PC-3 (cell line): ENCODE measurements at regions of chr9 and their contacts with region 1.

Region 1: GRCh38 chr9:34899535-34900158 is 58.4 kb upstream of the PHF24 start:
- DNase-seq: peak; percentile 76
- ATAC-seq: peak; percentile 100
- H3K4me3 ChIP-seq: no peak overlapping the region
- H3K27ac ChIP-seq: no peak overlapping the region
- H3K4me1 ChIP-seq: no peaks in the 10 kb centered on the region
- H3K27me3 ChIP-seq: peaks cover 22% of the 10 kb centered on the region
- CTCF ChIP-seq: peak; percentile 74

Region 2: DNA sequence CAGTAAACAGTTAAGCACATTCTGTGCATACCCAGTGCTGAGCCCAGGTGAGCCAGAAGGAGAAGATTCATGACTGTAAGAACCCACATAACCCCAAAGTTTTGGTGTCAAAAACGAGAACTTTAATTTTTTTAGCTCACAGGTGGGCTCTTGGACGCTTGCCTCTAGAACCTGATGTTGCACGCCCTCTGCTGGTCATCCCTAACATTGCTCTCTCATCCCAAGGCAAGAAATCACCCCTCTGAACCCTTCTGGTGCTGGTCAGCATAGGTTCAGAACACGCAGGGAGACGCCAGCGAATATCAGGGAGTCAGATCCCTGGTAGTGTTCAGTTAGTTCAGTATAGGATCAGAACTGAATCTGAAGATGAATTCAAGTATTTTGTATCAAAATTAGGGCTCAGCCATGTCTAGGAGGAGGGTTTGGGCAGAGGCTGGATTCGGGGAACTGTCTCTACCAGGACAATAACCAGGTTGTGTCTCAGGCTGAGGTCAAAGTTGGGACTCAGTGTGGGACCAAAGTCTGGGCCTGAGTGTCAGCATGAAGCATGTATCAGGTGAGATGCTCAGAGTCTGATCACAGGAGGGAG is 85.8 kb after region 1 on chr9:
- CTCF ChIA-PET with region 1: interaction called, 13 read pairs
- POLR2A ChIA-PET with region 1: no interaction called
- intact Hi-C with region 1: loop called (anchors 2 kb)
- DNase-seq: peak; percentile 65
- ATAC-seq: no peak
- H3K4me3 ChIP-seq: no peak overlapping the region
- H3K27ac ChIP-seq: no peak overlapping the region
- H3K4me1 ChIP-seq: no peaks in the 10 kb centered on the region; the same call in 1 of the 2 replicates
- H3K27me3 ChIP-seq: no peaks in the 10 kb centered on the region
- CTCF ChIP-seq: peak; percentile 74

Region 3: GRCh38 chr9:34994260-34994899 is 94.7 kb after region 1 on chr9:
- CTCF ChIA-PET with region 1: interaction called, 22 read pairs
- POLR2A ChIA-PET with region 1: no interaction called
- intact Hi-C with region 1: no loop called
- DNase-seq: peak; percentile 63
- ATAC-seq: peak; percentile 25
- H3K4me3 ChIP-seq: no peak overlapping the region
- H3K27ac ChIP-seq: no peak overlapping the region
- H3K4me1 ChIP-seq: peaks cover 34% of the 10 kb centered on the region
- H3K27me3 ChIP-seq: no peaks in the 10 kb centered on the region
- CTCF ChIP-seq: peak; percentile 70

Region 4: DNA sequence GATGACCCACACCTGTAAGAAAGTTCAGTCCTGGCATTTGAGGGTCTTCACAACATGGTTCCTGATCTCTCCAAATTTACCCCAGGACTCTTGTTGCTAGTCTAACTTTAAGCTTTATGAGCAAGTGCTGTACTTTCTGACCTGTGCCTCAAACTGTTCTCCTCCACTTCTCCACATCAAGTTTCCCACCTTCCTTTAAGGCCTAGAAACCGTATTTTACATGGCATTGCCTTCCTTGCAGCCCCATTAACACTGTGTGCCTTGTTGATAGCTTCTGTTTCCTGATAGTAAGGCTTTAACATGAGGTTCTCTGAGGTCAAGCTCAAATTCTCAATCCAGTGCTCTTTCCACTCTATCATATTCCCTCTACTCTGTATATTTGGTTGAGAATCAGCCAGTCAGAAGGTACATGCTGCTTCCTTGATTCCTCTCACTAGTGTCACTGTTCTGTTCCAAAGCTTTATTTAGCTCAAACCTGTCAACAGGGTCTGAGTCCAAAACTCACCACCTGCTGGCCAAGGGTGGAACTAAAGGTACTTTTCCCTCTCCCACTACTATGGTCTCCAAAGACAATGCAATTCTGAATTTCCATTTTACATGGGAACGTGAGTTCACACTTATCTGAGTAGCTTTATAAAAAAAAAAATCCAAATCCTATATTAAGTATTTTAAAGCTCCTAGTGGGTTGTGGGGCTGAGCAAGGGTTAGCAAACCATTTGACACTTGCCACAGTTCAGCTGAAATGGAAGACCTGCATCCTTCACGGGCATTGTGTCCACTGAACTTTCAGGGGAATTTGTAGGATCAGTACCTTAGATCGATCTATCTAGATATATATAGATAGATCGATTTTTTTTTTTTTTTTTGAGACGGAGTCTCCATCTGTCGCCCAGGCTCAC is 151.7 kb after region 1 on chr9:
- CTCF ChIA-PET with region 1: interaction called, 16 read pairs
- POLR2A ChIA-PET with region 1: no interaction called
- intact Hi-C with region 1: loop called (anchors 1 kb)
- DNase-seq: peak; percentile 61
- ATAC-seq: peak; percentile 60
- H3K4me3 ChIP-seq: no peak overlapping the region
- H3K27ac ChIP-seq: no peak overlapping the region
- H3K4me1 ChIP-seq: no peaks in the 10 kb centered on the region
- H3K27me3 ChIP-seq: no peaks in the 10 kb centered on the region
- CTCF ChIP-seq: peak; percentile 68

Region 5: DNA sequence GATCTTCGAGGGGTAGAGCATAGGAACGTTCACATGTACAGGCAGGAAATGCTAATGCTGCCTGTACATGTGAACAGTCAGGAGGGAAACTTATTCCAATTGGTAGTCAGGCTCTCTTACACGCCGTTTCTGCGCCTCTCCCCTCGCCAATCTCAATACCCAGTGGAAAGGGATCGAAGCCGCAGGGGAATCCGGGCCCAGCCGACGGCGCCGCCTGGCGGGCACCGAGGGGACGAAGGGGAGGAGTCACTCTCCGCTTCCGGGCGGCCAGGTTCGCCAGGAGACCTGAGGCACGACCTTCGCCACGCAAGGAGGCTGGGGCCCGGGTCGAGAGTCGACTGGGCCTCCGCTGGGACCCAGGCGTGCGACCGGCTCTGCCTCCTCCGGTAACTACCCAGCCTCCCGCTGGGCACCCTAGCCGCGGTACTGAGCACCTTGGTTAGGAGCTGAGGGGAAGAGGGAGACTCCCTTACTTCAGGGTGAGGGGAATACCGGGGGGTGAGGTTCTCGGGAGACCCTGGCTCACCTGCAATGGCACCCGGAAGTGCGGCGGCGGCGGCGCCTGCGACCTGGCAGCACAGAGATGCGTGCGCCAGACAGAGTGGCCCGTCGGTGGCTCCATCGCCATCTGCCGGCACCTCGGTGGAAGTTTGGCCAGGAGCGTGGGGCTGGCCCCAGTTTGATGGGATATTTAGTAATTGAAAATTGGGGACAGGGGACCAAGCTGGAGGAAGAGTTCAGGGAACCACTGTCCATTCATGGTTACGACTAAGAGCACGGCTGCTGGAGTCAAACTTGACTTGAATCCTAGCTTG is 196.6 kb after region 1 on chr9 and contains the start of gene PIGO:
- CTCF ChIA-PET with region 1: interaction called, 4 read pairs
- POLR2A ChIA-PET with region 1: no interaction called
- intact Hi-C with region 1: loop called (anchors 2 kb)
- DNase-seq: peak; percentile 77
- ATAC-seq: peak; percentile 98
- H3K4me3 ChIP-seq: peak within 1 kb of the TSS; percentile 90
- H3K27ac ChIP-seq: peak within 1 kb of the TSS; percentile 93
- H3K4me1 ChIP-seq: no peaks in the 10 kb centered on the region; the same call in 1 of the 2 replicates
- H3K27me3 ChIP-seq: no peaks in the 10 kb centered on the region
- CTCF ChIP-seq: peak; percentile 65
- total RNA-seq, gene PIGO: 18.2 and 19.9 TPM in 2 replicates